Astrocyte of the cerebellum (primary cell): ENCODE measurements at regions of chr1 and their contacts with region 1.

Region 1: GRCh38 chr1:182595641-182596240 is 6.7 kb upstream of the RNASEL start:
- DNase-seq: no peak
- H3K4me3 ChIP-seq: no peak overlapping the region
- CTCF ChIP-seq: peak; percentile 95

Region 2: GRCh38 chr1:182556279-182556678 is 39.5 kb before region 1 on chr1:
- in situ Hi-C with region 1: no loop called
- DNase-seq: no peak
- H3K4me3 ChIP-seq: no peak overlapping the region
- CTCF ChIP-seq: no peak

Region 3: GRCh38 chr1:182649041-182649440 is 53.3 kb after region 1 on chr1:
- in situ Hi-C with region 1: no loop called
- DNase-seq: no peak
- H3K4me3 ChIP-seq: no peak overlapping the region
- CTCF ChIP-seq: no peak

Region 4: GRCh38 chr1:182662121-182662890 is 66.6 kb after region 1 on chr1:
- in situ Hi-C with region 1: no loop called
- DNase-seq: no peak
- H3K4me3 ChIP-seq: no peak overlapping the region
- CTCF ChIP-seq: no peak

Region 5: DNA sequence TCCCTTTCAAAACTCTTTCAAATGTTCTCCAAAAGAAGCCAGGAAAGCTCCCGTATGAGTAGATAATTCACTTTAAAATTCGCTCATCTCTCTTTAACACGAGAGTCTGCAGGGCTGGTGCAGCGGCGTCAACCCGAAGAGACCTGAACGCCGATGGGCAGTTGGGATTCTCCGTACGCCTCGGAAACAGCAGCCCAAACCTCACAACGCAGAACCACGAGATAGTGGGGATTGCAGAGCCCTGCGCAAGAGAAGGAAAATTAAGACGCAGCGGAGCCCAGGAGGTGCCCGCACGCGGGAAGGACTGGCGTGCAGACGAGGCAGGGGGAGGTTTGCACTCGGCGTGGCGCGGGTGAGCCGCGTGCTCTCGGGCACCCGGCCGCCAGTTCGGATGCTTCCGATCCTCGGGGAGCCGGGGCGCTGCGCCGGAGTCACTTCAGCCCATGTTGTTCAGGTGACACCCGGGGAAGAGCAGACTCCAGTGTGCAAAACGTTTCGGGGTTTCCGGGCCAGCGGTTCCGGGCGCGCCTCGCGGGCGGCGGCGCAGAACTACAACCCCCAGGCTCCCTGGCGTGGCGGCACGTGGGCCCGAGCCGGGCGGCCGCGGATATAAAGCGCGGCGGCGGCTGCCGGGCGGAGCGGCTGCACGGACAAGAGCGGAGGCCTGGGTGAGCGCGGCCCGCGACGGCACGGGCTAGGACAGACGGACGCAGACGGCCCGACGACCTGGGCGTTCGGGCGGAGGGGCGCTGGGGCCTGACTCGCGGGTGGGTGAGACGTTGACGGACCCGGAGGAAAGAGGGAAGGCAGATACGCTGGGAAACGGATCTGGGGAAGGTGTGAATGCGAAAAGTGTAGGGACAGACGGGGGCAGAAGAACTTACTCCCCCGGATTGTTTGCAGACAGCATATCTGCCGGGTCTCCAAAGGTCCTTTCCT is 193.7 kb after region 1 on chr1 and contains the start of gene NPL:
- in situ Hi-C with region 1: loop called (anchors 5 kb)
- DNase-seq: no peak
- H3K4me3 ChIP-seq: peak within 1 kb of the TSS; percentile 55
- CTCF ChIP-seq: no peak